Psoas muscle (tissue), 8 donors: ENCODE measurements at regions of chr11 and their contacts with region 1.

Region 1: DNA sequence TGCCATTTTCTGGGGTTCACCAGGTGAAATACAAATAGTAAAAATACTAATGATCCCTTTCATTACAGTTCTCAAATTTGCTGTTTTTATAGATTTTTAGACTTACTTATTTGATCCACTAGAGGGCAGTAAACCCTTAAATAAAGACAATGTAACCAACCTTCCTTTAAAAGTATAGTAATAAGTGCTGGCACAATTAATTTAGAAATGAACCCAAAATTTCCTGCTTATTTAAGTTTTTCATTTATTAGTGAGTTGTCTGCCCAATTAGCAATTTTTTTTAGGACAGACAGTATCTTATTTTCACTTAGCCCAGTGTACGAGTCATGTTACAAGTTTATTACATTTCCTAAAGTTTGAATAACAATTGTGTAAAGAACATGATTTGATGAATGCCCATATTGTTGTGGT is 4.7 kb downstream of the DDIAS start:
- DNase-seq: no peak
- ATAC-seq: no peak
- H3K4me3 ChIP-seq: no peak overlapping the region
- H3K27ac ChIP-seq: no peak overlapping the region
- H3K4me1 ChIP-seq: no peaks in the 10 kb centered on the region
- H3K27me3 ChIP-seq: no peaks in the 10 kb centered on the region
- CTCF ChIP-seq: peak; percentile 72

Region 2: DNA sequence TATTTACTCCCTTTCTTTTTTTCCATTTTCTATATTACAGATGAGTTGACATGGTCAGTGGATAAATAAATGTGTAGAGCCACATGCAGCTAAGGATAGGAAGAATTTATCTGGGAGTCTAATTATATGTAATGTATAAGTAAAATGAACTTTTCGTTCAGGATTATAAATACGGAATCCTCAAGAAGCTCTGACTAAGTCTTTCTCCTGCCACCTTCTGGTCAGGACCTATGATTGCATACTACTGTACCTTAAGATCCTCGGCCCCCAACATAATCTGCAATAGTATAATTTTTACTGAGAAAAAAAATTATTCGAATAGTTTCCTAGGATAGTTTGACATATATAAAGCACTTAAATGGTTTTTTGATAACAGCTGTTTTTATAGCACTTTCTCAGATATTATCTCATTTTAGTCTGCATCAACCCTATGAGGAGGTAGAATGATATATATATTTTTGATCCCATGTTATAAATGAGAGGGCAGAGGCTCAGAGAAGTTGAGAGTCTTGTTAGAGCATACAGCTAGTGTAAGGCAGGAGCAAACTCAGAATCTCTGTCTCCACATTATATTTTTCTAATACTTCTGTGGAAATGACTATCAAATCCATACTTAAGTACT is 343.8 kb after region 1 on chr11:
- intact Hi-C with region 1: loop called (anchors 2 to 5 kb)
- DNase-seq: no peak
- ATAC-seq: peak; percentile 59 to 85 (median 72)
- H3K4me3 ChIP-seq: no peak overlapping the region
- H3K27ac ChIP-seq: no peak overlapping the region
- H3K4me1 ChIP-seq: no peaks in the 10 kb centered on the region
- H3K27me3 ChIP-seq: no peaks in the 10 kb centered on the region
- CTCF ChIP-seq: peak; percentile 75